ENCODE measurements at regions of chr1 and their contacts with region 1.

Region 1: GRCh38 chr1:12434174-12434573 is 183.8 kb downstream of the DHRS3 start:
- DNase-seq: peak; percentile 57
- H3K4me3 Mint-ChIP-seq: no peak overlapping the region
- H3K27ac Mint-ChIP-seq: peak overlapping the region; percentile 56
- H3K4me1 Mint-ChIP-seq: peaks cover 61% of the 10 kb centered on the region
- H3K27me3 Mint-ChIP-seq: no peaks in the 10 kb centered on the region

Region 2: GRCh38 chr1:12296623-12297022 is 137.6 kb before region 1 on chr1:
- intact Hi-C with region 1: loop called (anchors 1 kb)
- DNase-seq: no peak
- H3K4me3 Mint-ChIP-seq: peak overlapping the region; percentile 17
- H3K27ac Mint-ChIP-seq: peak overlapping the region; percentile 63
- H3K4me1 Mint-ChIP-seq: peaks cover 40% of the 10 kb centered on the region
- H3K27me3 Mint-ChIP-seq: no peaks in the 10 kb centered on the region

Region 3: GRCh38 chr1:12384836-12385456 is 49.2 kb before region 1 on chr1:
- intact Hi-C with region 1: loop called (anchors 1 kb)
- DNase-seq: peak; percentile 22
- H3K4me3 Mint-ChIP-seq: no peak overlapping the region
- H3K27ac Mint-ChIP-seq: peak overlapping the region; percentile 36
- H3K4me1 Mint-ChIP-seq: peaks cover 42% of the 10 kb centered on the region
- H3K27me3 Mint-ChIP-seq: no peaks in the 10 kb centered on the region

Region 4: DNA sequence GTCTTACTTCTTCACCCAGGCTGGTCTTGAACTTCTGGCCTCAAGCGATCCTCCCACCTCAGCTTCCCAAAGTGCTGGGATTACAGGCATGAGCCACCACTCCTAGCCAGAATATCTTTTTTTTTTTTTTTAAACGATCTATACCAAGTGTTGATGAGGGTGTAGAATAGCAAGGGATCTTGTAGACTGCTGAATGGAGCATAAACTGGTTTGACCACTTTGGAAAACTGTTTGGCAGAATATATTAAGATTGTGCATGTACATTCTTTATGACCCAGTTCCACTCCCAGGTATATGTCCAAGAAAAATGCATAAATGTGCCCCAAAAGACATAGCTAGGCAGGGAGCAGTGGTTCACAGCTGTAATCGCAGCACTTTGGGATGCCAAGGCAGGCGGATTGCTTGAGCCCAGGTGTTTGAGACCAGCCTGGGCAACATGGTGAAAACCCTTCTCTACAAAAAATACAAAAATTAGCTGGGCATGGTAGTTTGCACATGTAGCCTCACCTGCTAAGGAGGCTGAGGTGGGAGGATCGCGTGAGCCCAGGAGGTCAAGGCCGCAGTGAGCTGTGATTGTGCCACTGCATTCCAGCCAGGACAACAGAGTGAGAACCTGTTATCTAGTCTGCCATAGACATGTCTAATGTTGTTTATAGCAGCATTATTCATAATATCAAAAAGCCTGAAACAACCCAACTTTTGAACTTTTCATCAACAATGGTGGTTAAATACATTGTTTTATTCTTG is 20.3 kb before region 1 on chr1:
- intact Hi-C with region 1: loop called (anchors 1 kb)
- DNase-seq: no peak
- H3K4me3 Mint-ChIP-seq: no peak overlapping the region
- H3K27ac Mint-ChIP-seq: no peak overlapping the region
- H3K4me1 Mint-ChIP-seq: peaks cover 24% of the 10 kb centered on the region
- H3K27me3 Mint-ChIP-seq: no peaks in the 10 kb centered on the region

Region 5: GRCh38 chr1:12472798-12473551 is 38.8 kb after region 1 on chr1:
- intact Hi-C with region 1: loop called (anchors 1 kb)
- DNase-seq: peak; percentile 60
- H3K4me3 Mint-ChIP-seq: peak overlapping the region; percentile 43
- H3K27ac Mint-ChIP-seq: peak overlapping the region; percentile 95
- H3K4me1 Mint-ChIP-seq: peaks cover 69% of the 10 kb centered on the region
- H3K27me3 Mint-ChIP-seq: no peaks in the 10 kb centered on the region

Region 6: GRCh38 chr1:12518931-12519692 is 84.9 kb after region 1 on chr1:
- intact Hi-C with region 1: loop called (anchors 2 kb)
- DNase-seq: no peak
- H3K4me3 Mint-ChIP-seq: peak overlapping the region; percentile 22
- H3K27ac Mint-ChIP-seq: peak overlapping the region; percentile 72
- H3K4me1 Mint-ChIP-seq: peaks cover 32% of the 10 kb centered on the region
- H3K27me3 Mint-ChIP-seq: no peaks in the 10 kb centered on the region